OCI-LY7 (cell line): ENCODE measurements at regions of chr3 and their contacts with region 1.

Region 1: DNA sequence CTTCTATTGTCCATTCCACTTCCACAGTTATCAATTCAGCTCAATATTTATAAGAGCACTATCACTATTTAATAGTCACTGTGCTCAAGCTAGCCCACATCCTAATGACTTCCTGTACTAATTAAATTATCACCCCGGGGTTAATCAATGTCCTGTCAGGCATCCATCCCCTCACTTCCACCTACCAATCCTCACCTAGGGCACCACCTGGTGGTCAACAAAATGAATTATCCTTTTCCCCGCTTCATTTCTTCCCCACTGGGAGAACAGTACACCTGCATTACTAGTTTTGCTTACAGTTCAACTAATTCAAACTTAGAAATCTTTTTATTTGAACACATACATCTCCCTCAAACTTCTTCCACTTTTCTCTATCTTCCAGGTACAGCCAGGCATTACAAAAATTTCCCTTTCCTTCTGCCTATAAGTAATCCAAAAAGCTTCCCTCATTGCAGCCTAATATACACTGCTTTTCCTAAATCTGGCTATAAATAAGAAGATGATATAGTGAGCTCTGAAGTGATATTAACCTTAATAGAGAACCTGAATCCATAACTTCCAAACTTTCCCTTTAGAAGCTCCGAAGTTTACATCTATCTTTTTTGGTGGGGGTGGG is 68.5 kb downstream of the TMCC1 start:
- DNase-seq: peak; percentile 78
- H3K4me3 ChIP-seq: no peak overlapping the region
- H3K27ac ChIP-seq: no peak overlapping the region
- H3K4me1 ChIP-seq: peaks cover 71% of the 10 kb centered on the region
- CTCF ChIP-seq: peak; percentile 94

Region 2: DNA sequence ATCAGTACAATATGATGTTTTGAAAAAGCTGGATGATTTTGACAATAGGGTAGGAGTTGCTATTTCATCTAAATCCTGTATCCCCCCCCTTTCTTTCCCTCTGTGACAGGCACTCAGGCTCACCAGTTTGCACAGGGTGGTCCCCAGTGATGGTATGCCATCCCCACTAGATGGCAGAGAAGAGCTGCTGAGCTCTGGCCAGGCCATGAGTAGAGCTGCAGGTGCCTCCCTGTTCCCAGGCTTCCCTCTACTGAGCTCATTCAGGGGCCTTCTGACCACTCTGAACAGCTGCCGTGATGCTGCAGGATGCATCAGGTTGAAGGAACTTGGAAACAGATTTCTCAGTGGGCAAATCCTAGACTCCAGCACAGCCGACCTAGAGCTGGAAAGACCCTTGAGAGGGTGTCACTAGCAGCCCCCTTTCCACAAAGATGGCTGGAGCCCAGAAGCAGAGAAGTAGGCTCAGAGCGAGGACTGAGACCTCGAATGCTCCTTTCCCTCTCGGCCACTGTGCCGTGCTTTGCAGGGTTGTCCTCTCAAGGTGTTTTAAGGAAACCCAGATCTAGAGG is 441.7 kb before region 1 on chr3:
- CTCF ChIA-PET with region 1: no interaction called
- POLR2A ChIA-PET with region 1: interaction called, 4 read pairs
- intact Hi-C with region 1: loop called (anchors 5 kb)
- DNase-seq: peak; percentile 82
- H3K4me3 ChIP-seq: no peak overlapping the region
- H3K27ac ChIP-seq: no peak overlapping the region
- H3K4me1 ChIP-seq: no peaks in the 10 kb centered on the region
- CTCF ChIP-seq: peak; percentile 93

Region 3: GRCh38 chr3:129490242-129491045 is 334.6 kb before region 1 on chr3:
- CTCF ChIA-PET with region 1: no interaction called
- POLR2A ChIA-PET with region 1: interaction called, 3 read pairs
- intact Hi-C with region 1: loop called (anchors 1 kb)
- DNase-seq: peak; percentile 76
- H3K4me3 ChIP-seq: no peak overlapping the region
- H3K27ac ChIP-seq: no peak overlapping the region
- H3K4me1 ChIP-seq: no peaks in the 10 kb centered on the region
- CTCF ChIP-seq: peak; percentile 95

Region 4: GRCh38 chr3:129627429-129628168 is 197.4 kb before region 1 on chr3:
- CTCF ChIA-PET with region 1: no interaction called
- POLR2A ChIA-PET with region 1: interaction called, 3 read pairs
- intact Hi-C with region 1: loop called (anchors 1 kb)
- DNase-seq: peak; percentile 69
- H3K4me3 ChIP-seq: no peak overlapping the region
- H3K27ac ChIP-seq: no peak overlapping the region
- H3K4me1 ChIP-seq: peaks cover 13% of the 10 kb centered on the region
- CTCF ChIP-seq: peak; percentile 88

Region 5: DNA sequence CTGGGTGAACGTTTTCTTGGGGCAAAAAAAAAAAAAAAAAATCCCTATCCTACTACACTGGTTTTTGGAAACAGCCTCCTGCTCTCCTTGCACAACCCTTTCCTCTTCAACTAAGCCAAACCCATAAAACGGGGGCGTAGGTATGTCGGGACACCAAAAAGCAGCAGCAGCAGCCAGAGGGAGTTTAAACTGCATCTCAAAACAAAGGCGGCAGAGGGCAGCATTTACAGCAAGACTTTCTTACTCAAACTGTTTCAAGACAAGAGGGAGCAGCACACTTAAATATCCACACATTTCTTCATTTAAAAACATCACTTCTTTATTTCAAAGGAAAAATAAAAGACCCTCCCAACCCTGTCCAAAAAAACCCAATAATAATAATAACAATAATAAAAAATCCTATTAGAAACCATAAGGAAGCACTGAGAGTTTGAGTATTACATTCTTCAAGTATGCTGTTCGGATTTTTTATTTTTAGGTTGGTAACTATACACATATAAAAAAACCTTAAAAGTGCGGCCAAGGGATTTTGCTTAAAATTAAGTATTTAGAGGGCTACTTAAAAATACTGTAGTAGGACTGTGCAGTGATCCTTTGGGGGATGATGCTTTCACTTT is 174.7 kb before region 1 on chr3:
- CTCF ChIA-PET with region 1: no interaction called
- POLR2A ChIA-PET with region 1: interaction called, 3 read pairs
- intact Hi-C with region 1: loop called (anchors 1 kb)
- DNase-seq: peak; percentile 70
- H3K4me3 ChIP-seq: no peak overlapping the region
- H3K27ac ChIP-seq: no peak overlapping the region
- H3K4me1 ChIP-seq: no peaks in the 10 kb centered on the region
- CTCF ChIP-seq: peak; percentile 90

Region 6: GRCh38 chr3:129893581-129894070 is 68.6 kb after region 1 on chr3 and contains the start of gene TMCC1:
- CTCF ChIA-PET with region 1: no interaction called
- POLR2A ChIA-PET with region 1: interaction called, 6 read pairs
- intact Hi-C with region 1: loop called (anchors 5 kb)
- DNase-seq: peak; percentile 94
- H3K4me3 ChIP-seq: peak within 1 kb of the TSS; percentile 85
- H3K27ac ChIP-seq: peak within 1 kb of the TSS; percentile 86
- H3K4me1 ChIP-seq: peaks cover 41% of the 10 kb centered on the region
- CTCF ChIP-seq: no peak
- total RNA-seq, gene TMCC1: 24.0 and 31.7 TPM in 2 replicates

Region 7: DNA sequence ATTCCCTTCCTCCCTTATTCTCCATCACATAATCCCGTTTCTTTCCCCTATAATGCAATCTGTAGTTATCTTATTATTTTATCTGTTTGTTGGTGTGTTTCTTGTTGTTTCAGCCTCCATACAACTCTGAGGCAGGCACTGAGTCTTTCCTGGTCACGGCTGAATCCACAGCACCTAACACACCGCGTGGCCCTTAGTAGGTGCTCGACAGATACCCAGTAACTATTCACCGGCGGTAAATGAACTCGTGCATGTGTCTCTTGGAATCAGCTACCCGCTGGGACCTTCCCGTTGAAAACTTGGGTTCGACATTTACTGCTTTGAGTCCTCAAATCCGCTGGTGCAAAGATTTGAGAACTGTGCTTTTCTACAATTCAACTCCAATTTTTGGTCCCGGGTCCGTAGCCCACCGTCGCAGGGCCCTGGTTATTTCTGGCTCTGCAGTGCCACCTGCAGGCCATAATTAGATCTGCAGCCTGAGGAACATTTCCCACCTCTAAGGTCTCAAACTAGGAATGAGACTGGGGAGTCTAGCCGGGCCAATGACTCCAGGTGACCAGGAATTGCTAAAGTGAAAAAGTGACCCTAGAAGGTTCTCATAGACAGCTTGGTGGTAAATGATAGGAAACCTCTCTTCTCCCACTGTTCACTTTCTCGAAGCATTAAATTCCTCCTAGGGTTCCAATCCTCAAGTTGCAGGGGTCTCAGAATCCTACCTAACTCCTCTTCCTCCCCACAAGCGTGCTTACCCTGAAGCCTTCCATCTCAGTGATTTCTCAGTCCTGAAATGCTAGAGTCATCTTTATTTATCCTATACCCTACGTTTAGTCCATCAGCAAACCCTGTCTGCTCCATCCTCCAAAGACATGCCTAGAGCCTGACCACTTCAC is 109.4 kb after region 1 on chr3:
- CTCF ChIA-PET with region 1: no interaction called
- POLR2A ChIA-PET with region 1: no interaction called
- intact Hi-C with region 1: loop called (anchors 1 kb)
- DNase-seq: peak; percentile 41
- H3K4me3 ChIP-seq: no peak overlapping the region
- H3K27ac ChIP-seq: no peak overlapping the region
- H3K4me1 ChIP-seq: no peaks in the 10 kb centered on the region
- CTCF ChIP-seq: peak; percentile 99